ENCODE measurements at regions of chr13 and their contacts with region 1.

Region 1: GRCh38 chr13:24605923-24606372 is 74.3 kb upstream of the ATP12A start:
- DNase-seq: no peak
- ATAC-seq: peak; percentile 86
- H3K4me3 Mint-ChIP-seq: no peak overlapping the region
- H3K27ac Mint-ChIP-seq: peak overlapping the region; percentile 71
- H3K4me1 Mint-ChIP-seq: peaks cover 26% of the 10 kb centered on the region
- H3K27me3 Mint-ChIP-seq: no peaks in the 10 kb centered on the region

Region 2: GRCh38 chr13:24407844-24408243 is 198.1 kb before region 1 on chr13:
- CTCF ChIA-PET with region 1: no interaction called
- DNase-seq: no peak
- ATAC-seq: no peak
- H3K4me3 Mint-ChIP-seq: no peak overlapping the region
- H3K27ac Mint-ChIP-seq: no peak overlapping the region
- H3K4me1 Mint-ChIP-seq: peaks cover 5% of the 10 kb centered on the region
- H3K27me3 Mint-ChIP-seq: peaks cover 53% of the 10 kb centered on the region

Region 3: GRCh38 chr13:24618014-24618955 is 12.3 kb after region 1 on chr13:
- CTCF ChIA-PET with region 1: interaction called, 13 read pairs
- DNase-seq: peak; percentile 97
- ATAC-seq: peak; percentile 91
- H3K4me3 Mint-ChIP-seq: peak overlapping the region; percentile 43
- H3K27ac Mint-ChIP-seq: peak overlapping the region; percentile 98
- H3K4me1 Mint-ChIP-seq: peaks cover 67% of the 10 kb centered on the region
- H3K27me3 Mint-ChIP-seq: no peaks in the 10 kb centered on the region

Region 4: GRCh38 chr13:24625870-24626849 is 20.2 kb after region 1 on chr13:
- CTCF ChIA-PET with region 1: interaction called, 17 read pairs
- DNase-seq: peak; percentile 72
- ATAC-seq: peak; percentile 75
- H3K4me3 Mint-ChIP-seq: no peak overlapping the region
- H3K27ac Mint-ChIP-seq: peak overlapping the region; percentile 97
- H3K4me1 Mint-ChIP-seq: peaks cover 62% of the 10 kb centered on the region
- H3K27me3 Mint-ChIP-seq: no peaks in the 10 kb centered on the region

Region 5: DNA sequence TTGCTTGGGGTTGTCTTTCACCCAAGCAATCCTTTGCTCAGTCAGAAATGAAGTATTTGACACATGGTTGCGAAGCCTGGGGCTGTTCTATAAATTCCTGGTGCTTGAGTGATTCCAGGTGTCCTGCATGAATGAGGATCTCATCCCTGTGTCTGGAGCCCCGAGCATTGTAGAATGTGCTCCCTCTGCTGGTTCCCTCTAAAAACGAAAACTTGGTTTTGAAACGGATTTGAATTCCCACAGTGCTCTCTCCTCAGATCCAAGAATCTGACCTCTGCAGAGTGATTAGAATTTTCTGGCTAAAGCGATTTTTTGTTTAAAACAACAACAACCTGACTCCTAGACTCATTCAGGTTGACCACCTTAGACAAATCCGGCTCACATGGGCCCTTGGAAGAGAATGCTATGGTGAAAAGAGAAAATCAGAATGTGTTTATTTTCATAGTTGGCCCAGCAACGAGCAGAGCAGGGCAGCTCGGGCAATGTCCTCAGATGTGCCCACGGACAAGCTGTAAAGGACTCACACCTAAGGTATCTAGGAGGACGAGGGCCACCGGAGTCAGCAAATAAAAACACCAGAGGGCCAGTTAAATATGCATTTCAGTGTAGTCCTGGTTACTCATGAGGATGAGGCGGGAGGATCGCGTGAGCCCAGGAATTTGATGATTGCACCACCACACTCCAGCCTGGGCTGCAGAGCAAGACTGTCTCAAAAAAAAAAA is 65.6 kb after region 1 on chr13:
- CTCF ChIA-PET with region 1: interaction called, 29 read pairs
- DNase-seq: no peak
- ATAC-seq: peak; percentile 30
- H3K4me3 Mint-ChIP-seq: no peak overlapping the region
- H3K27ac Mint-ChIP-seq: no peak overlapping the region
- H3K4me1 Mint-ChIP-seq: peaks cover 20% of the 10 kb centered on the region
- H3K27me3 Mint-ChIP-seq: peaks cover 4% of the 10 kb centered on the region

Region 6: DNA sequence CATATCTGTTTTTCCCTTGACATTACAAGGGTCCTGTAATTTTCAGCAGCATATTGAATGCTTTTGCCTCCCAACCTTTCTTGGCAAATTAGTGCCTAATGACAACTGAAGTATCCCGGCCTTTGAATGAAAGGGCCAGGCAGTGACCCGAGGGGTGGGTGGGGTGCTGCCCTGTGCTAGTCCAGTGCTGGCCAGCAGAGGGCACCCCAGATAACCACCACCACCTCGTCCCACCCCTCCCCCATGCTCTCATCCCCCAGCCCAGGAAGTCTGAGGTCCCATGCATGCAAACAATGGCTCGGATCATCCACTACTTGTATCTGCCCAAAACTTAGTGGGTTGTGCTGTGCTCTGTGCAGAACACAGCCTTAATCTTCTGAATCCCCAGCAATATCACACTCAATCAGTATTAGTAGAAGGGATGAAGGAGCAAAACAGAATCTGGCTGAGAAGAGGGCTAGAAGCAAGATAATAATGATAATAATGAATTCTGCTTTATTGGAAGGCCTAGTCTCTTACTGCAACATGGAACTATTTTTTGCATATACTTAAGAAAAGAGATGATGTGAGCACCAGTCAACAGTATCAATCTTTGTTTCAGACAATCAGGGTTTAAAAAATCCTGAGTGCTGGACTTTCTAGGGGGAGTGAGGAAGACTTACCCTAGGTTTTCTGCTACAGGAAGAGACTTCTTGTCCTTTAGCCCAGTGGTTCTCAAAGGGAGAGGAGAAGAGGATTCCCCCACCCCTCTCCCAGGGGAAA is 78.1 kb after region 1 on chr13:
- CTCF ChIA-PET with region 1: interaction called, 19 read pairs
- DNase-seq: peak; percentile 81
- ATAC-seq: peak; percentile 77
- H3K4me3 Mint-ChIP-seq: no peak overlapping the region
- H3K27ac Mint-ChIP-seq: peak overlapping the region; percentile 68
- H3K4me1 Mint-ChIP-seq: peaks cover 43% of the 10 kb centered on the region
- H3K27me3 Mint-ChIP-seq: peaks cover 41% of the 10 kb centered on the region

Region 7: GRCh38 chr13:24727731-24728601 is 122.0 kb after region 1 on chr13:
- CTCF ChIA-PET with region 1: interaction called, 19 read pairs
- DNase-seq: peak; percentile 81
- ATAC-seq: peak; percentile 98
- H3K4me3 Mint-ChIP-seq: no peak overlapping the region
- H3K27ac Mint-ChIP-seq: no peak overlapping the region
- H3K4me1 Mint-ChIP-seq: peaks cover 18% of the 10 kb centered on the region
- H3K27me3 Mint-ChIP-seq: peaks cover 21% of the 10 kb centered on the region

Measured in activated CD8-positive, alpha-beta memory T cell treated with anti-CD3 and anti-CD28 coated beads, Interleukin-2, amount 10 ng/mL, durations not matched to agents 7 days and 5 days (primary cell).